MCF 10A (cell line): ENCODE measurements at regions of chr11 and their contacts with region 1.

Region 1: DNA sequence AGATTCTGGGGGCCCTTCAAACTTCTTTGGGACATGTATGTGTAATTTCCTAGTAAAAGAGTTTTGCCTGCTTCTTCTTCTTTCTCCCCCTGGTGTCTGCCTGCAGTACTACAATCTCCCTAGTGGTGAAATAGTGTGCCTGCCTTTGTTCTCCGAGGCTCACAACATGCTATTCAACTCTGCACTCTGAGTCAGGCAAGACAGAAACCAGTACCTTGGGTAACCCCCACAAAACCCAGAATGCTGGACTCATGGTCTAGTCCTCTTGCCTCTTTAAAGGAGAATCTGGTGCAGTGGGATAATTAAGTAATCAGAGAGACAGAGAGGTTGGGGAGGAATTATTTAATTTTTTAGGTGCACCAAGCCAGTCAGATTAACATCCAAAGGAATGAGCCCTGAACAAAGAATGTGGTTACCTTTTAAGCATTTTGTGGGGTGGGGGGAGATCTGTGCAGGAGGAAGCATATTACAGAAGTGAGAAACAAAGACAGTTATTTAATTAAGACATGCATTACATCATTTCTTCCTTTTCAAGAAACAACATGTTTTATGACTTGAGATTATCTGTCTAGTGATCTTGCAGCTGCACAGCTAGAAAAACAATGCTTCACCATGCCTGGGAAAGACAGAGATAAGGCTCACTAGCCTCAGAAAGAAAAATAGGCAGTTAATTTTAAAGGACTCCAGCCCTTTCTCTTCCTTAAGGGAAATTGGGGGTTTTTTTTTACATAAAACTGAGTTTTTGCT is 11.0 kb upstream of the MS4A6A start:
- DNase-seq: peak; percentile 82
- H3K4me3 Mint-ChIP-seq: no peak overlapping the region
- H3K27ac Mint-ChIP-seq: no peak overlapping the region
- H3K4me1 Mint-ChIP-seq: peaks cover 6% of the 10 kb centered on the region
- H3K27me3 Mint-ChIP-seq: peaks cover 11% of the 10 kb centered on the region
- CTCF ChIP-seq: peak; percentile 85

Region 2: GRCh38 chr11:60118338-60118737 is 75.5 kb before region 1 on chr11:
- CTCF ChIA-PET with region 1: interaction called, 3 read pairs
- POLR2A ChIA-PET with region 1: no interaction called
- intact Hi-C with region 1: loop called (anchors 1 kb)
- DNase-seq: peak; percentile 5
- H3K4me3 Mint-ChIP-seq: no peak overlapping the region
- H3K27ac Mint-ChIP-seq: no peak overlapping the region
- H3K4me1 Mint-ChIP-seq: no peaks in the 10 kb centered on the region
- H3K27me3 Mint-ChIP-seq: no peaks in the 10 kb centered on the region
- CTCF ChIP-seq: no peak

Region 3: DNA sequence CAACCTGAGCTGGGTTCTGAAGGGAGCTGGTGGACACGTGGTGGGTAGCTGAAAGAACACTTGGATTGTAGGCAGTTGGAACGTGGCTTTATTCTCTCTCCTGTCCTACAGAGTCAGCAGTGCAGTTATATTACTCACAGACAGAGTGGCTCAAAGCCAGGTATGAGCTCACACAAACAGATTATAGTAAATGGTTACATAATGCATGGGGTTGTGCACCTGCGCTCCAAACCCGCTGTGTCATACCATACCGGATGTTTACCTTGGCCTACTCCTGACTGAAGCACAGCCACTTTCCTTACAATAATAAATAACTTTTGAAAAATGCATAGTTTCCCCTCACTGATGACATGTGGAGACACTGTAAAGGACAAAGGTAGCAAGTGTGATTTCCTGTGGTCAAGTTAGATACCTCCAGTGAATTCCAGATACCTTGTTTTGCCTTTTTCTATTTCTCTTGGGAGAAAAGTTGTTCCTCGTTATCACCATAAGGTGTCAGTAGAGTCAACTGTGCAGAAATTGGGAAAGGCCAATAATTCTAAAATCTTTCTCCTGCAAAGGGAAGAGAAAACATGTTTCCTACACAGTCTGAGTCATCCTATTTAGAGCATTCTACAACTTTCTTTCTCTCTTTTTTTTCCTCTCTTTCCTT is 24.5 kb before region 1 on chr11:
- CTCF ChIA-PET with region 1: interaction called, 35 read pairs
- POLR2A ChIA-PET with region 1: interaction called, 3 read pairs
- intact Hi-C with region 1: loop called (anchors 1 kb)
- DNase-seq: peak; percentile 98
- H3K4me3 Mint-ChIP-seq: no peak overlapping the region
- H3K27ac Mint-ChIP-seq: peak overlapping the region; percentile 80
- H3K4me1 Mint-ChIP-seq: peaks cover 22% of the 10 kb centered on the region
- H3K27me3 Mint-ChIP-seq: no peaks in the 10 kb centered on the region
- CTCF ChIP-seq: peak; percentile 76

Region 4: DNA sequence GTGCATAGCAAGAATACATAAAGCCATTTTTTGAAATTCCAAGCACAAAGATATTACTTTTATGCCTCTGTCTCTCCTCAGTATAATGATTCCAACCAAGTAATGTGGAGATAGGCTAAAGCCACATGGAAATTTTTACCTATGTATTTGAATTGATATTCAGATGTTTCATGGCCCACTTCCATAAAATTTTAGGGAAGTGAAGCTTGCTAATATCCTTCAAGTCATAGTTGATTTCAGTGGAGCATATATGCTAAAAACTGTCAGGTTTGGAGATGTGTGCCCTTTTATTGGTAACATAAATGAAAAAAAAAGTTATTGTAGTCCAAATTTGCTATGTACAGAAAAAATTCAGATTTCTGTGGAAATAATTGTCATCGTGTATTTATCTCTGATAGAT is 36.8 kb after region 1 on chr11:
- CTCF ChIA-PET with region 1: no interaction called
- POLR2A ChIA-PET with region 1: no interaction called
- intact Hi-C with region 1: no loop called
- DNase-seq: no peak
- H3K4me3 Mint-ChIP-seq: no peak overlapping the region
- H3K27ac Mint-ChIP-seq: no peak overlapping the region
- H3K4me1 Mint-ChIP-seq: no peaks in the 10 kb centered on the region
- H3K27me3 Mint-ChIP-seq: no peaks in the 10 kb centered on the region
- CTCF ChIP-seq: no peak

Region 5: GRCh38 chr11:60477035-60477445 is 283.2 kb after region 1 on chr11:
- CTCF ChIA-PET with region 1: no interaction called
- POLR2A ChIA-PET with region 1: no interaction called
- intact Hi-C with region 1: no loop called
- DNase-seq: no peak
- H3K4me3 Mint-ChIP-seq: no peak overlapping the region
- H3K27ac Mint-ChIP-seq: no peak overlapping the region
- H3K4me1 Mint-ChIP-seq: no peaks in the 10 kb centered on the region
- H3K27me3 Mint-ChIP-seq: peaks cover 28% of the 10 kb centered on the region
- CTCF ChIP-seq: no peak